ENCODE measurements at regions of chr15 and their contacts with region 1.

Region 1: DNA sequence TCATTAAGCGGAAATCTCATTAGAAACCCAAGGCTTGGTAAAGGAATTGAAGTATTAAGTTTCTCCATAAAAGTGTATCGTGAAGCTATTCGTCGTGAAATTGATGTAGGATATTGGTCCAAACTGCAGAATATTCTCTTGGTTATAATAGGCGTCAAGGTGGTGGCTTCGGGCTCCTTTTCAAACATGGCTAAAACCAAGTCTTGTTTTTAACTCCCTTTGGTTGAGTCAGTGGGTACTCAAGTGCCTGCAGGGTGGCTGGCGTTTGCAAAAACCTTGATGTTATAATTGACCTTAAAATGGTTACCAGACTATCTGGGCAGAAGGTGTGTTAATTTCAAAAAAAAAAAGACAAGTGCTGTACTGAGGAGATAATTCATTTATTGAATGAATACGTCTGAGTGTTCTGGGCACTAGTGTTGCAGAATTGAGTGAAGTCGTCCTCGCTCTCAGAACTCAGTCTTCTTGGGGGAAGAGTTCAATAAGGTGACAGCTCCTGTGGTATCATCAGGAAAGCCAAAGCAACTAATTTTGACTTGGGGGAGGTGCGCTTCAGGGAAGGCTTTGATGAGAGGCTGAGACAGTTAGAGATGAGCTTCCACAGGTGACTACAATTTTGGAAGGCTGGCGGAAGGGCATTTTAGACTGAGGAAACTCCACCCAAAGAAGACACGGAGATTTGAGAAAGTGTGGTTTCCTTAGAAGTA is 1.5 kb downstream of the UBE2Q2 start:
- DNase-seq: no peak
- H3K4me3 ChIP-seq: peak overlapping the region; percentile 70 to 98 (median 90)
- H3K27ac ChIP-seq: peak overlapping the region in 5 of 59 donors; percentile 69 to 89 (median 84)
- H3K27me3 ChIP-seq: no peaks in the 10 kb centered on the region
- CTCF ChIP-seq: no peak

Region 2: DNA sequence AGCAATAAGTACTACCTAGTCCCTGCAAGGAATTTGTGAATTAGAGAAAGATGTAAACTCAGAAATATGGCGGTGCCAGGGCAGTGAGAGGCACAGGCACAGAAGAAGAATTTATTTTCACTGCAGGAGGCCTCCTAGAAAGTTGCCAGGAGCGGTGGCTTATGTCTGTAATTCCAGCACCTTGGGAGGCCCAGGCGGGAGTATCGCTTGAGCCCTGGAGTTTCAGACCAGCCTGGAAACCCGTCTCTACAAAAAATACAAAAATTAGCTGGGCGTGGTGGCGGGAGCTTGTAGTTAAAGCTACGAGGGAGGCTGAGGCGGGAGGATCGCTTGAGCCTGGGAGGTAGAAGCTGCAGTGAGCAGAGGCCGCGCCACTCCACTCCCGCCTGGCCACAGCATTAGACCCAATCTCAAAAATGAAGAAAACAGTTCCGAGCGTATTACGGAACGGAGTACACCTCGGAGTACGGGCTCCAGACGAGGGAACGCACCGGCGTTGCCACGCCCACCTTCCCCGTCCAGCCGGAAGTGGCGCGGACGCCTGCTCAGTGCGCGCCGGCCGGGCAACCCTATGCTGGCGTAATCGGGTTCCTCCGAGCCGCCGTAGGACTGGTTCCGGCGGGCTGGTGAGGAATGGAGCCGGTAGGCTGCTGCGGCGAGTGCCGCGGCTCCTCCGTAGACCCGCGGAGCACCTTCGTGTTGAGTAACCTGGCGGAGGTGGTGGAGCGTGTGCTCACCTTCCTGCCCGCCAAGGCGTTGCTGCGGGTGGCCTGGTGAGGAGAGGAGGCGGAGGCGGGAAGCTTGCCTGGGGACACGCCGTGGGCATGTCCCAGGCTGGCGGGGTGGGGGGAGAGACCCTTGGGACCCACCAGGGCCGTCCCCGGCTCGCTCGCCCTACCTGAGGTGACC is 58.8 kb after region 1 on chr15 and contains the start of gene FBXO22:
- intact Hi-C with region 1: loop called in 1 of 2 experiments (anchors 5 kb)
- DNase-seq: peak; percentile 77 to 94 (median 90)
- H3K4me3 ChIP-seq: peak within 1 kb of the TSS; percentile 65 to 98 (median 91)
- H3K27ac ChIP-seq: peak within 1 kb of the TSS in 58 of 59 donors; percentile 4 to 91 (median 74)
- H3K27me3 ChIP-seq: no peaks in the 10 kb centered on the region
- CTCF ChIP-seq: peak in 29 of 56 donors; percentile 5 to 49 (median 23)
- total RNA-seq, gene FBXO22: 18.2 to 31.2 (median 23.7) TPM